Prostate gland (tissue), 2 donors: ENCODE measurements at regions of chr4 and their contacts with region 1.

Region 1: DNA sequence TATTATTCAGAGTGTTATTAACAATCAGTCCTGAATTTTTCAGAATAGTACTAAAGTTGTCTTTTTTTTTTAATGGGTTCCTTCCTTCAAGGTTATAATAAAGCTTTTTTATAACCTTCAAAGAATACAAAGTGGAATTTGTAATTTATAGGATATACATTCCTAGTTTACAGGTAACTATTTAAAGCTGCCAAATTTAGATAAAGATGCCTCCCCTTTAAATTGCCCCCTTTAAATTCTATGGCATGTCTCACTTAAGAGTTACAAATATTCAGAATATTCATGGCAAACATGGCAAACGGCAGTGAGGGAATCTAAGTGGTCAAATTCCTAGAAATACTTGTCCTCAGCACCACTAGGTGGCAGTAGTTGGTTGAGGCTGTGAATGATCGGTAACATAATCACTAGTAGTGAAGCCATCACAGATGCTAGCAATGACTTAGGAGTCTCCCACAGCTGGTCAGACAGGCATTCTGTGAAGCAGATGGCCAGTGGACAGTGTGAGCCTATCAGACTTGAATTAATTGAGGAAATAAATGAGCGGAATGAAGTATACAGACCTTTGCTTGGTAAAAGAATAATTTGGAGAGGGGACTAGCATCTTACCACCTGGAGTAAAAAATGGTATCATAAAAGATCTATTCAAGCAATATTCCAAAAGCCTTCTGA is 86.4 kb downstream of the CBR4 start:
- DNase-seq: peak; percentile 55
- H3K4me3 ChIP-seq: no peak overlapping the region
- H3K27ac ChIP-seq: no peak overlapping the region
- H3K4me1 ChIP-seq: no peaks in the 10 kb centered on the region
- H3K27me3 ChIP-seq: no peaks in the 10 kb centered on the region
- CTCF ChIP-seq: peak; percentile 45 to 80 (median 72)
- POLR2A ChIP-seq: no peak

Region 2: DNA sequence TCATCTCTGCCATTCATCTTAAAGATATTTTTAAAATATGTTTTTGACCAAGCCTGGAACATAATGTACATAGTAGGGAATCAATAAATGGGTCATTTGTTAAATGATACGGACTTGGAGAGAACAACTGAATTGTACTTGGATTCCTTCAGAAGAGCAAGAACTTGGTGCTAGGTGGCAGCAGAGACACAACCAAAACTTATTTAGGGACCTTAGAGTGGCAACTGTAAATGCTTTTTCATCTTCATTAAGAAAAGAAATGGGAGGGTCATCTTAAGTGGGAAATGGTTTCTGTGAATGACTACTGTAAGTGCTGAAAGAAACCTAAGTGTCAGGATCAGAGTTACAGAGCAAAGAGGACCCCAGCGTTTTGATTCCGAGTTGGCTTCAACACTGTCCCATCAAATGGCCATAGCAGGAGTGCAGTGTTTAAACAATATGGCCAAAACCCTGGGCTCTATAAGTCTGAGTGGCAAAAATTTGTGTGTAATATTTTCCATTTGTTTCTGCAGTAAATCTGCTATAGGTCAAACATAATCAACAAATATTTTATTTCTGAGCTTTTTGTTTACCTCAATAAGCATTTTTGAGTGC is 213.2 kb before region 1 on chr4:
- intact Hi-C with region 1: loop called (anchors 5 kb)
- DNase-seq: peak; percentile 46
- H3K4me3 ChIP-seq: no peak overlapping the region
- H3K27ac ChIP-seq: peak overlapping the region; percentile 9 to 58
- H3K4me1 ChIP-seq: no peaks in the 10 kb centered on the region
- H3K27me3 ChIP-seq: no peaks in the 10 kb centered on the region
- CTCF ChIP-seq: peak in 3 of 4 experiments; percentile 39 to 66 (median 61)
- POLR2A ChIP-seq: no peak

Region 3: DNA sequence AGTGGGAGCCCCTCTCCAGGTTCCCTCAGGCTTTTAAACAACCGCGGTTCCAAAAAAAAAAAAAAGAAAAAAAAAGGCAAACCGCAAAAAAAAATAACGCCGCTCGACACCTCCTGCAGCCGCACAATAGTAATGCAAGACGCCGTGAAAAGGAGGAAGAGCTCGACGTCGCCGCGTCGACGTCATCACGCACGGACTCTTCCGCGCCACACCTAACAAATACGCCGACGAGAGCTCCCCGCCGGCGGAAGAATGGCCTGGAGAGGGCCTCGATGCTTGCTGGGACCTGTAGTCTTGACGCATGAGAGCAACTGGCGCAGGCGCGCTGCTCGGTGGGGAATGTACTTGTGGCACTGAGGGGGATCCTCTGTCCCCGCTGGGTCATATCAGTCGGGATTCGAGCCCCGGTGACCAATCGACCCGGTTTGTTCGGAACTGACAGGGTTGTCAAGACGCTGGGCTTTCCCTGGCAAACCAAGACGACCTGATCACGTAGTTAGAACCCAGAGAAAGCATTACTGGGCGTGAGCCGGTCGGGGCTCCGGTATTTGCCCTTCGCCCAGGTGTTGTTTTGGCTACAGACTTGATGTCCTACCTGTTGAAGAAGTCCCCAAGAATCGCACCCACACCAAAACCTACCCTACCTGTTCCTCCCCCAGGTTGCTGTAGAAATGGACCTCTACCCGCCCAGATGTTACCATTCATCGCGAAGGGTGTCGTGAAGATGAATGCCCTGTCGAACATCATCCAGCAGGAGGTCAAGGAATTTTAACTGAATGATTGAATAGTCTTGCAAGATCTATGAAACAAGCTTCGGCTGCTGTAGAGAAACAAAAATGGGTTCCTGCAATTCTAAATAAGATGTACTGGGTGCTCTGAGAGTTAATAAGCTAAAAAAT is 86.7 kb after region 1 on chr4 and contains the start of gene CBR4:
- intact Hi-C with region 1: loop called (anchors 5 kb)
- DNase-seq: peak; percentile 98
- H3K4me3 ChIP-seq: peak within 1 kb of the TSS; percentile 60 to 64
- H3K27ac ChIP-seq: peak within 1 kb of the TSS; percentile 89 to 90
- H3K4me1 ChIP-seq: no peaks in the 10 kb centered on the region
- H3K27me3 ChIP-seq: no peaks in the 10 kb centered on the region
- CTCF ChIP-seq: peak in 2 of 4 experiments; percentile 36 to 52
- POLR2A ChIP-seq: peak; percentile 72
- total RNA-seq, gene CBR4: 15.6 to 23.7 TPM